CD14-positive monocyte (primary cell): ENCODE measurements at regions of chr19 and their contacts with region 1.

Region 1: GRCh38 chr19:57578487-57579205 is at the start of gene ZNF416:
- DNase-seq: peak; percentile 95 to 98 (median 97)
- H3K4me3 ChIP-seq: peak within 1 kb of the TSS; percentile 58 to 92 (median 73)
- H3K4me3 Mint-ChIP-seq: peak within 1 kb of the TSS; percentile 80 to 86
- H3K27ac ChIP-seq: peak within 1 kb of the TSS in 1 of 2 donors; percentile 75
- H3K27ac Mint-ChIP-seq: peak within 1 kb of the TSS in 2 of 7 donors; percentile 54 to 82
- H3K4me1 ChIP-seq: peaks cover 15 to 22% of the 10 kb centered on the region in 2 donors
- H3K4me1 Mint-ChIP-seq: peaks cover 19% of the 10 kb centered on the region
- H3K27me3 ChIP-seq: no peaks in the 10 kb centered on the region
- H3K27me3 Mint-ChIP-seq: peaks cover 0 to 7% (median 4%) of the 10 kb centered on the region in 3 donors
- CTCF ChIP-seq: no peak
- polyA plus RNA-seq, gene ZNF416: 0.48 to 2.1 (median 1.4) TPM

Region 2: DNA sequence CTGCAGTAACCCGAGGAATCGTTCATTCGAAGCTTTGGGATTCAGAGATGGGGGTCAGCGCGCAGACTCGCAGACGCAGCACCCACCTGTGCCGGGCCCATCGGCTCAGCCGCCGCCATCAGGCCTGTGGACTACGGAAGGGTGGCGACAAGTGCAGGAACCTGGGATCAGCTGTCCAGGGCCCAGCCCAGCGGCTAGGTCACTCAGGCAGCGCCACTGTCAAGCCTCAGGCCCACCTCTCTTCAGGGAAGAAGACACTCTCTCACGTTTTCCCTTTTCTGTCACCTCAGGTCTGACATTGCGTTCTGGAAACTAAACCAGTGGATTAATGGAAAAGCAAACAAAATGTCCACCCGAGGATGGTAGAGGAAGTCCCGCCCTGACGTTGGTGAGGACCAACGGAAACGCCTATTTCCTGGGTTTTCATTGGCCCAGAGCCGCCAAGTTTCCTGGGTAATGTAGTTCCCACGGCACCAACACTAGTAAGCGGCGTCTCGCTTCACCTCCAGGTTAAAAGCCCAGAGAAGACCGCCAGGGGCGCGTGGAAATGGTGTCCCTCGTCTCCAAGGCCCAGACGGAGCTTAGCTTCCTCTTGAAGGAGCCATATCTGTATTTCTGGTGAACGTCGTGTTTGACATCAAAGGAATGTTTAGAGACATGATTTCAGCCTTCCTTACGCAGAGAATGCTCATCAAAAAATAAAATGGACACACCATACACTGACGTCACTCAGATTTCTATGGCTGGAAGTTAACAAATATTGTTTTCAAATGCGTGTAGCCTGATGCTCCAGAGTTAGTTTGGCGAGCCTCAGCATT is 101.2 kb before region 1 on chr19 and contains the start of gene ZNF772:
- intact Hi-C with region 1: loop called in 1 of 2 experiments (anchors 5 kb)
- DNase-seq: peak; percentile 90 to 95 (median 93)
- H3K4me3 ChIP-seq: peak within 1 kb of the TSS; percentile 82 to 95 (median 87)
- H3K4me3 Mint-ChIP-seq: peak within 1 kb of the TSS; percentile 79 to 92
- H3K27ac ChIP-seq: peak within 1 kb of the TSS; percentile 51 to 91
- H3K27ac Mint-ChIP-seq: peak within 1 kb of the TSS; percentile 67 to 92 (median 88)
- H3K4me1 ChIP-seq: peaks cover 12 to 15% of the 10 kb centered on the region in 2 donors
- H3K4me1 Mint-ChIP-seq: peaks cover 13% of the 10 kb centered on the region
- H3K27me3 ChIP-seq: no peaks in the 10 kb centered on the region
- H3K27me3 Mint-ChIP-seq: peaks cover 0 to 2% (median 0%) of the 10 kb centered on the region in 3 donors
- CTCF ChIP-seq: peak; percentile 73
- polyA plus RNA-seq, gene ZNF772: 0.32 to 1.2 (median 0.99) TPM

Region 3: DNA sequence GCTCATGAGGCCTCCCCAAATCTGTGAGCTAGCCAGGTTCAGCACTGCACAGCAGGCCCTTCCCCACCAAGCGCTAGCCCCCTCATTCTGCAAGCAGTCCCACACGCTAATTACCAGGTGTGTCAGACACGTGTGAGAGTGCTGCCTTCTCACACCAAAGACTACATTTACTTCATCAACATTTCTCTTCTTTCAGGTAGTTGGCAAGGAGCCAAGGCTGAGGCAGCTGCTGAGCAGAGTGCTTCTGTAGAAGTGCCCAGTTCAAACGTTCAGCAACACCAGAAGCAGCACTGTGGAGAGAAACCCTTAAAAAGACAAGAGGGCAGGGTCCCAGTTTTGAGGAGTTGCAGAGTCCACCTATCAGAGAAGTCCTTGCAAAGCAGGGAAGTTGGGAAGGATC is 72.5 kb before region 1 on chr19:
- intact Hi-C with region 1: loop called in 1 of 2 experiments (anchors 5 kb)
- DNase-seq: no peak
- H3K4me3 ChIP-seq: no peak overlapping the region
- H3K4me3 Mint-ChIP-seq: no peak overlapping the region
- H3K27ac ChIP-seq: no peak overlapping the region
- H3K27ac Mint-ChIP-seq: no peak overlapping the region
- H3K4me1 ChIP-seq: no peaks in the 10 kb centered on the region
- H3K4me1 Mint-ChIP-seq: no peaks in the 10 kb centered on the region
- H3K27me3 ChIP-seq: no peaks in the 10 kb centered on the region
- H3K27me3 Mint-ChIP-seq: no peaks in the 10 kb centered on the region
- CTCF ChIP-seq: no peak

Region 4: DNA sequence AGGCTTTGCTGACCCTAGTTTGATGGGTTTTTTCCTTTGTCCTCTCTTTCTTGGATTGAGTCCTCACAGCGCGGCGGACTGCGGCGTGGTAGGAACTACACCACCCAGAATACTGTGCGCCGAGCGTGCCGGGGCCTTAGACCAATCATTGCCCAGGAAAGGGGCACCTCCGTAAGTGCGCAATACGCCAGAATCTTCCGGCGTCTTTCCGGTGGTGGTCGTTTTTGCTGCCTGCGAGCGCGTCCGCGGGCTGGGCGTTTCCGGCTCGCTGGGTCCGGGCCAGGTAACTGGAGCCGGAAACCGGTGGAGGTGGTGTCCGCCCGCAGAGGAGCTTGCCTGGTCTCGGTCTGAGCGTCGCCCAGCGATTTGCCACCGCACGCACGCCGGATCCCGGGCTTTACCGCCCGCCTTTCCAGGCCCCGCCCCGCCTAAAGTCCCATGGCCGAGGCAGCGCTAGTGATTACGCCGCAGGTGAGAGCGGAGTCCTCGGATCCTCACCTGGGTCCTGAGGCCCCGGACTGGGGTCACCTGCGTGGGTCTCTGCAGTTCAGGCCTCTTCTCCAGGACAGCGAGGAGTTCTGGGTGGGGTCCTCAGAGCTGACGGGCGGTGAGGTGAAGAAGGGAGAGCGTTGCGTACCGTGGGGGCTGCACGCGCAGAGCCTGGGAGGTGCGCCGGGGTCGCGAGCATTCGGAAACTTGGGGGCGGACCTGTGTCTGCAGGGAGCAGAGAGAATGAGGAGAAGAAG is 51.3 kb before region 1 on chr19 and contains the start of gene ZNF549:
- intact Hi-C with region 1: loop called in 1 of 2 experiments (anchors 10 kb)
- DNase-seq: peak; percentile 66 to 73 (median 68)
- H3K4me3 ChIP-seq: peak within 1 kb of the TSS; percentile 55 to 94 (median 93)
- H3K4me3 Mint-ChIP-seq: peak within 1 kb of the TSS; percentile 90 to 95
- H3K27ac ChIP-seq: peak within 1 kb of the TSS; percentile 46 to 84
- H3K27ac Mint-ChIP-seq: peak within 1 kb of the TSS; percentile 35 to 91 (median 78)
- H3K4me1 ChIP-seq: peaks cover 12 to 17% of the 10 kb centered on the region in 2 donors
- H3K4me1 Mint-ChIP-seq: peaks cover 12% of the 10 kb centered on the region
- H3K27me3 ChIP-seq: no peaks in the 10 kb centered on the region
- H3K27me3 Mint-ChIP-seq: peaks cover 0 to 4% (median 3%) of the 10 kb centered on the region in 3 donors
- CTCF ChIP-seq: no peak
- polyA plus RNA-seq, gene ZNF549: 0.54 to 1.5 (median 0.74) TPM

Region 5: DNA sequence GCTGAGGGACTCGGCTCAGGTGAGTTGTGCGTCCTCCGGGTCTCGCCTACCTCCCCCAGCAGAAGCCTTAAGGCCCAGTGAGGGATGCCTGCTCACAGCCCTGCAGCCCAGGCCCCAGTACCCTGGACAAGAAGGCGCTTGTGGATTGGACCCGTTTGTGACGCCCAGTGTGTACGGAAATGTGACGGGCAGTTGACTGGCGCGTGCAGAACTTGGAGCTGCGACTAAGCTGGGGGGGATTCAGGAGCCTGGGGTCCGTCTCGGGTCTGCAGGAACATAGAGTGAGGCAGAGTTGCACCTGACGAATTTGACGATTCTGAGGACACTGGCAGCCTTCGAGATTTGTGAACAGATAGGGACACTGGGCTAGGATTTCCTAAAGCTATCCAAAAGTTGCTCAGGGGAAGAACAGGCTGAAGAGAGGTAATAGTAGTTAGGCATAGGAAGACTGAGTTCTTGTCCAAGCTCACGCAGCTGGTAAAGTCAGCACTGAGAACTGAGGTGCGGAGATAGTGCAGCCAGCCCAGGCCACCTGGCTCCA is 103.7 kb after region 1 on chr19:
- intact Hi-C with region 1: loop called (anchors 2 to 5 kb)
- DNase-seq: no peak
- H3K4me3 ChIP-seq: peak overlapping the region; percentile 74 to 97 (median 79)
- H3K4me3 Mint-ChIP-seq: peak overlapping the region; percentile 91 to 92
- H3K27ac ChIP-seq: peak overlapping the region; percentile 2 to 87
- H3K27ac Mint-ChIP-seq: peak overlapping the region in 6 of 7 donors; percentile 60 to 90 (median 79)
- H3K4me1 ChIP-seq: peaks cover 11 to 16% of the 10 kb centered on the region in 2 donors
- H3K4me1 Mint-ChIP-seq: peaks cover 19% of the 10 kb centered on the region
- H3K27me3 ChIP-seq: no peaks in the 10 kb centered on the region
- H3K27me3 Mint-ChIP-seq: peaks cover 2 to 15% (median 4%) of the 10 kb centered on the region in 3 donors
- CTCF ChIP-seq: no peak